HEK293 (cell line): ENCODE measurements at regions of chr13 and their contacts with region 1.

Region 1: DNA sequence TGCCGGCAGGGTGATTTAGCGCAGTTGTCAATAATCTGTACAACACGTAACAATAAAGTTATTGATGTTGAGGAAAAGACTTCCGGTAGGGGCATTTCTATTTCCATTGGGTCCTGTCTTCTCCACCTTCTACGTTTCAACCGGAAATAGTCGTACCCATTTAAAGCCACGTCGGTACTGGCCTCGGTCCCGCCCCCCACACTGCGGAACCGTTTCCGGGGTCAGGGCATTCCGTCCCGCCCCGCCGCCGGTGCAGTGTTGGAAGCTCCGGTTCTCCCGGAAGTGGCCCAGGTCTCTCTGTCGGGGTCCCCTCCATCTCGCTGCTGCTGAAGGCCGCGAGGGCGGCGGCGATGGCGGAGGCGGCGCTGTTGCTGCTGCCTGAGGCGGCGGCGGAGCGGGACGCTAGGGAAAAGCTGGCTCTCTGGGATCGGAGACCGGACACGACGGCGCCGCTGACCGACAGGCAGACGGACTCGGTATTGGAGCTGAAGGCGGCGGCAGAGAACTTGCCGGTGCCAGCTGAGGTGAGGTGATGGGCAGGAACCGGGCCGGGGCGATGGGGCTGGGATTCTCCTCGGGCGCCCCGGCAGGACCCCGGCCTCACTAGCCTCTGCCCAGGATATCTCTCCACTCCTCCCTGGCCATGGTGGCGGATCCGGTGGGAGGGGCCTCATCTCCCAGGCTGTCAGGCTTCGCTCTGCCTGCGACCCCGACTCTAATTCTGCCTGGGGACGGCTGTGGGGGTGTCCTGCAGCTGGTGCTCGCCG is at the start of gene COG3:
- H3K4me3 ChIP-seq: peak within 1 kb of the TSS; percentile 100
- H3K27ac ChIP-seq: peak within 1 kb of the TSS; percentile 87
- H3K4me1 ChIP-seq: peaks cover 11% of the 10 kb centered on the region
- CTCF ChIP-seq: no peak; the same call in 1 of the 2 replicates

Region 2: DNA sequence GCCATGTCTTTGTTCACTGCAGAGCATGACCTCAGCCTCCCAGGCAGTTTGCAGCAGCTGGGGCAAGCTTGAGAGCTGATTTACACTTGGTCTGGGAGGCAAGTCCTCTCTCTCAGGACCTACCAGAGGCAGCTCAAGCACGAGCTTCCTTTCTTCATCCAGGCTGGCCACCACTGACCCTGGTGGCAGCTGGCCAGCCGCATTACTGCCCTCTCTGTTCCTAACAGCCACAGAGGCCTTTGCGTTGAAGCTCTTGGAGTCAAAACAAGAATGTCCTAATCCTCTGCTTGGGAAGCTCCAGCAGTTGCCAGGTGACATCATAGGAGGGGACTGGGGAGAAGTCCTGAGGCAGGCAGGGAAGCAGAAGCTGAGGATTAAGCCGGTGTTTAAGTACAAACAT is 561.3 kb before region 1 on chr13:
- CTCF ChIA-PET with region 1: no interaction called
- POLR2A ChIA-PET with region 1: no interaction called
- H3K4me3 ChIP-seq: no peak overlapping the region
- H3K27ac ChIP-seq: no peak overlapping the region
- H3K4me1 ChIP-seq: no peaks in the 10 kb centered on the region; the same call in 1 of the 2 replicates
- CTCF ChIP-seq: no peak

Region 3: GRCh38 chr13:45433381-45433790 is 31.5 kb before region 1 on chr13:
- CTCF ChIA-PET with region 1: no interaction called
- POLR2A ChIA-PET with region 1: interaction called, 10 read pairs
- H3K4me3 ChIP-seq: no peak overlapping the region
- H3K27ac ChIP-seq: no peak overlapping the region
- H3K4me1 ChIP-seq: no peaks in the 10 kb centered on the region
- CTCF ChIP-seq: no peak